Dorsolateral prefrontal cortex (tissue), 120 donors: ENCODE measurements at regions of chr6 and their contacts with region 1.

Region 1: DNA sequence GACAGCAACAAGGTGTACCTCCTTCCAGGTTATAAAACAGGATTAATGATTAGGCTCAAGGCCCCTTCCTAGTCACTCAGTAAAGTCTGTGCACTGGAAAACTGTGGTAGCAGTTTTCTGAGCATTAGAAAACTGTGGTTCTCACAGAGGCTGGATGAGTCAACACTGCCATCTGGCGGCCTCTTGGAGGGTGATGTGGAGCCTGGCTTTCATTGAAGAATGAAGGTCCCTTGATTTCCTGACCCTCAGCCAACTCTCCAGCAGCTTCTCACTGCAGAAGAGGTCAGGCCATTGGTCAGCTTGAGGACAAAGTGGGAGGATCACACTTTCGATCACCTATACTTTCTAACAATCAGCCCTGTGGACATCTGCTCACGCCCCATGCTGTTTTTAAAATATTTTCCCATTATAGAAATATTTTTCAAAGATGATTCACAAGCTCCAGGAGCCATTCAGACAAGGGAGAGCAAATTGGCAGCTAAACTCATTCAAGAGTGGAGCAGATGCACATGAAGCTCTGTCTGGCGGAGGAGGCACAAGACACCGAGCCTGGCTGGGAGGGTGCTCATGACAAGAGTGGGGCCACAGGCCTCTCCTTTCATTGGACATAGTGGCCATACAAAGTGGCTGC is 23.2 kb downstream of the PSMB1 start:
- DNase-seq: peak; percentile 73 to 88 (median 80)
- H3K4me3 ChIP-seq: no peak overlapping the region
- H3K27ac ChIP-seq: peak overlapping the region in 13 of 59 donors; percentile 1 to 48 (median 12)
- H3K27me3 ChIP-seq: no peaks in the 10 kb centered on the region
- CTCF ChIP-seq: peak; percentile 74 to 96 (median 90)

Region 2: DNA sequence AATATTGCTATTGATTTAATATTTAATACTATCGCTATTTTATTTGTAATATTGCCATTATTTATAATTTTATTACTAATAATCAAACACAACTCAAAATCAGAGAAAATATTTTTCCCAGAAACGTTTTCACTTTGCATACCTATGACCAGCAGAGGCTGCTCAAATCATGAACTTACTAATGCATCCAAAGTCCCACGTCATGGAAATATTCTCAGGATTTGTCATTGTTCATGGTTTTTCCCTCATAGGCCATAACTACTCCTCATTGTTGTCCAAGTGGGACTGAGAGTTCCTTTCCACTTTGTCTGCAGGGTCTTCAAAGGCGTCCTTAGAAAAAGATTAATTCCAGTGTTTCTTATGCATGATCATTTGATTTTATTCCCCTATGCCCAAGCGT is 1621.1 kb before region 1 on chr6:
- intact Hi-C with region 1: loop called in 1 of 2 experiments (anchors 10 kb)
- DNase-seq: no peak
- H3K4me3 ChIP-seq: no peak overlapping the region
- H3K27ac ChIP-seq: no peak overlapping the region
- H3K27me3 ChIP-seq: no peaks in the 10 kb centered on the region
- CTCF ChIP-seq: no peak

Region 3: GRCh38 chr6:169692516-169692915 is 837.4 kb before region 1 on chr6:
- intact Hi-C with region 1: loop called in 1 of 2 experiments (anchors 10 kb)
- DNase-seq: no peak
- H3K4me3 ChIP-seq: no peak overlapping the region
- H3K27ac ChIP-seq: no peak overlapping the region
- H3K27me3 ChIP-seq: no peaks in the 10 kb centered on the region
- CTCF ChIP-seq: no peak

Region 4: GRCh38 chr6:169789982-169790927 is 739.7 kb before region 1 on chr6:
- intact Hi-C with region 1: loop called (anchors 2 to 5 kb)
- DNase-seq: peak; percentile 57 to 87 (median 78)
- H3K4me3 ChIP-seq: peak overlapping the region; percentile 41 to 79 (median 66)
- H3K27ac ChIP-seq: peak overlapping the region in 48 of 59 donors; percentile 16 to 87 (median 67)
- H3K27me3 ChIP-seq: no peaks in the 10 kb centered on the region
- CTCF ChIP-seq: peak; percentile 40 to 99 (median 96)

Region 5: DNA sequence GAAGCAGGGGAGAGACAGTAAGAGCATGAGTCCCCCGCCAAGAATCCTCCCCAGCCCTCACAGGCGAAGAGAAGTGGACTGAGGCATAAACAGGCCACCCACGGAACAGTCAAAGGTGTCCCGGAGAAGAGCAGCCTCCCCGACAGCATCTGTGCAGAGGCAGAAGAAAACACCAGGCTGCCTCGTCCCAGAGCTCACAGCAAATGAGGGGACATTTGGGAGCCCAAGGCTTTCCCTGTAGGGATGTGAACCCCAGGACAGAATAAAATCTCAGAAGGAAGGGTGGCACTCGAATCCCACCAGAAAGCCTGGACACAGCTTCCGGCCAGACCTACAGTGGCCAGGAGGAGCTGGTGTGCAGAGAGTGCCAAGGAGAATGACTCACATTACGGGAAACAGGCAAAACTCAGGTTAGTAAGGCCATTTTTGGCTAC is 329.5 kb before region 1 on chr6:
- intact Hi-C with region 1: no loop called
- DNase-seq: peak in 3 of 10 donors; percentile 32 to 52 (median 45)
- H3K4me3 ChIP-seq: no peak overlapping the region
- H3K27ac ChIP-seq: no peak overlapping the region
- H3K27me3 ChIP-seq: no peaks in the 10 kb centered on the region
- CTCF ChIP-seq: no peak

Region 6: GRCh38 chr6:170371588-170371987 is 158.4 kb before region 1 on chr6:
- intact Hi-C with region 1: no loop called
- DNase-seq: peak in 9 of 10 donors; percentile 45 to 78 (median 66)
- H3K4me3 ChIP-seq: peak overlapping the region in 7 of 59 donors; percentile 2 to 22 (median 8)
- H3K27ac ChIP-seq: peak overlapping the region in 45 of 59 donors; percentile 7 to 82 (median 60)
- H3K27me3 ChIP-seq: no peaks in the 10 kb centered on the region
- CTCF ChIP-seq: peak in 31 of 56 donors; percentile 9 to 58 (median 31)